ENCODE measurements at regions of chr20 and their contacts with region 1.

Region 1: GRCh38 chr20:63321136-63321831 is 28.3 kb downstream of the COL20A1 start:
- DNase-seq: peak; percentile 90 to 92
- H3K4me3 ChIP-seq: no peak overlapping the region
- H3K27ac ChIP-seq: no peak overlapping the region
- H3K4me1 ChIP-seq: peaks cover 0 to 10% of the 10 kb centered on the region in 2 donors
- H3K27me3 ChIP-seq: no peaks in the 10 kb centered on the region
- CTCF ChIP-seq: no peak
- POLR2A ChIP-seq: no peak

Region 2: DNA sequence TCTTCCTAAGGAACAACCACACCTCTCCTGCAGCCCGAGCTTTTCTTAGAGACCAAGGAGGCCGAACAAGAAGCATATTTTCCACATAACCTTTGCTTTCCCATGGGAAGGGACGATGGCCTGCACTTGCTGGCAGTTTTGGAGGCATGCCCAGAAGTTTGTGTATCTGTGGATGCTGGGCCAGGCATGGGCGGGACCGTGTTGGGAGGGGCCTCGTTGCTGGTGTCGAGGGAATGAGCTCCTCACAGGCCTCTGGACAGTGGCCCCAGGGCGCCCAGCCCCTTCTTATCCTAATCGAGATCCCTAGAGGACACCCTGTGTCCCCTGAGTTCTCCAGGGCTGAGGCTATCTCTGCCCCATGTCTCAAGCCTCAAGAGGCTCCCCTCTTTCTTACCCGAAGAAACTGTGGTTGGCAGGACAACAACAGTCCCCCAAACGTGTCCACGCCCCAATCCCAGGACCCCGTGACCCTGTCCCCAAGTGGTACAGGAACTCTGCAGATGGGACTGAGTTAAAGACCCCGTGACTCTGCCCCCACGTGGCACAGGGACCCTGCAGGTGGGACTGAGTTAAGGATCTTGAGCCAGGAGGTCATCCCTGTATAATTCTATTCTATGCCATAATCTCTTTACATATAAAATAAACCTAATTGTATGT is 215.0 kb before region 1 on chr20:
- intact Hi-C with region 1: no loop called
- DNase-seq: peak in 1 of 2 donors; percentile 22
- H3K4me3 ChIP-seq: no peak overlapping the region
- H3K27ac ChIP-seq: no peak overlapping the region
- H3K4me1 ChIP-seq: peaks cover 3 to 12% of the 10 kb centered on the region in 2 donors
- H3K27me3 ChIP-seq: no peaks in the 10 kb centered on the region
- CTCF ChIP-seq: no peak
- POLR2A ChIP-seq: no peak

Region 3: GRCh38 chr20:63191400-63191799 is 129.9 kb before region 1 on chr20:
- intact Hi-C with region 1: no loop called
- DNase-seq: no peak
- H3K4me3 ChIP-seq: no peak overlapping the region
- H3K27ac ChIP-seq: no peak overlapping the region
- H3K4me1 ChIP-seq: no peaks in the 10 kb centered on the region
- H3K27me3 ChIP-seq: no peaks in the 10 kb centered on the region
- CTCF ChIP-seq: no peak
- POLR2A ChIP-seq: no peak

Region 4: DNA sequence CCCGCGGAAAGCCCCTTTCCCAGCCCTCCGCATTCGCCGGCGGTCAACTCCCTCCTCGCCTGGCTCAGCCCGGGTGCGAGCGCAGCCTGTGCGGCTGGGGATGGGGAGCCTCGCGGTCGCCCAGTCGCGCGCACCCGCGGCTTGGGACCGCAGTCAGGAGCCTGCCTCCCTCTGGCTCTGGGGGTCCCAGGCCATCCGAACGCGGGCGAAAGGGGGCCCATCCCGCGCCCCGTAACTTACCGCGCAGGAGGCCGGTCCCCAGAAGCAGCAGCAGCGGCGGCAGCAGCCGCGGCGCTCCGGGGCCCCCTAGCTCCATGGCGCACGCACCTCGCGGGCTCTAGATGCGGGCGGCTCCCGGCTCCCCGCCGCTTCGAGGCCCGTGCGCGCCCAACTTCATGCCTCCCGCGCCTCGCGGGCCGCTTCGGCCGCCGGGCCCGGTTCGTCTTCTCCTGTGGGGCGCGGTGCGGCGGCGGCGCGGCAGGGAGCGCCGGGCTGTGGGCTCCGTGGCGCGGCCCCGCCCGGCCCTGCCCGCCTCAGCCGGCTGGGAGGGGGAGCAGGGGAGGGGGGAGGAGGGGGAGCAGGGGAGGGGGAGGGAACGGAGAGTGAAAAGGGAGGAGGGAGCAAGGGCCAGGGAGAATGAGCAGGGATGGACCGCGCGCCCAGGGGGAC is 39.7 kb after region 1 on chr20 and contains the start of gene CHRNA4:
- intact Hi-C with region 1: loop called (anchors 5 kb)
- DNase-seq: no peak
- H3K4me3 ChIP-seq: no peak within 1 kb of the TSS
- H3K27ac ChIP-seq: no peak within 1 kb of the TSS
- H3K4me1 ChIP-seq: peaks cover 11 to 20% of the 10 kb centered on the region in 2 donors
- H3K27me3 ChIP-seq: no peaks in the 10 kb centered on the region
- CTCF ChIP-seq: no peak
- POLR2A ChIP-seq: no peak
- total RNA-seq, gene CHRNA4: 0.54 to 6.3 (median 1.9) TPM